T-cell (primary cell): ENCODE measurements at regions of chr7 and their contacts with region 1.

Region 1: GRCh38 chr7:139321071-139321745 is 19.9 kb upstream of the FMC1 start:
- DNase-seq: peak in 1 of 35 experiments; percentile 14
- ATAC-seq: no peak
- H3K4me3 ChIP-seq: no peak overlapping the region
- H3K4me3 Mint-ChIP-seq: no peak overlapping the region
- H3K27ac ChIP-seq: no peak overlapping the region
- H3K27ac Mint-ChIP-seq: no peak overlapping the region
- H3K4me1 ChIP-seq: no peaks in the 10 kb centered on the region
- H3K4me1 Mint-ChIP-seq: no peaks in the 10 kb centered on the region
- H3K27me3 ChIP-seq: peaks cover 0 to 5% of the 10 kb centered on the region in 2 experiments
- H3K27me3 Mint-ChIP-seq: no peaks in the 10 kb centered on the region

Region 2: DNA sequence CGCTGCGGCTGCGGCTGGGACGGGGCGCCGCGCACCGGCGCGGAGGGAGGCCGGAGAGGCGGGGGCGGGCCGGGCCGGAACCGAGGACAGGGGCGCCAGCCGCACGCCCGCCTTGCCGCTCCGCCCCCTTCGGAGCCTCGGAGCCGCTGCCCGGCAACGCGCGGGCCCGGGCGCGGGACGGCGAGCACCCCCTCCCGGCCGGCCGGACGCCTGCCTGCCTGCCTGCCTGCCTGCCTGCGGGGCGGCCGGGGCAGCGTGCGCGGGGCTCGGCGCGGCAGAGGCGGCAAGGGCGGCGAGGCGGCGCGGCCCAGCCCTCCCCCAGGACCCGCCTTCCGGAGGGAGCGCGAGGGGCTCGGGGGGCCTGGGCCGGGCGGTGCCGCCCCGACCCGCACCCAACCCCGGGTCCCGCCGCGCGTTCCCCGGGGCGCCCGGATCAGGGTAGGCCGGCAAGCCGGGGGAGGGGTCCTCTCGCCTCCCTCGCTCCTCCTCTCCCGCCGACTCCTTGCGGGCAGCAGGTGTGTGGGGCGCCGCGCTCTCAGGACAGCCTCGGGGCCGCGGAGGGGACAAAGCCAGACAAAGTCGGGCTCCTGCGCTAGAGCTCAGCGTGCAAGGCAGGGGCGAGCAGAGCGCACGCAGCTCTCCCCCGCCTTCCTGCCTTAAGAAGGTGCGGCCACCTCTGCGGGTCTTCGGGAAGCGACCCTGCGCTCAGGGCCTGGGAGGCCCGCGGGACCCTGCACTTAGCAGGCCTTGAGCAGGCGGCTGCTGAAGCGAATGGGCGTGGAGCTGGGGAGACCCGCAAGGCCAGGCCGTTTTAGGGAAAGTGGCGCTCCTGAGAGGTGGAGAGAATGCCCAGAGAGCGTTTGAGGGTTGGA is 339.6 kb before region 1 on chr7 and contains the start of gene KIAA1549:
- CTCF ChIA-PET with region 1: no interaction called
- POLR2A ChIA-PET with region 1: interaction called in 1 of 2 experiments, 10 read pairs
- DNase-seq: peak in 28 of 35 experiments; percentile 4 to 62 (median 18)
- ATAC-seq: peak; percentile 83 to 90 (median 84)
- H3K4me3 ChIP-seq: peak within 1 kb of the TSS; percentile 47 to 75
- H3K4me3 Mint-ChIP-seq: peak within 1 kb of the TSS; percentile 84 to 92 (median 88)
- H3K27ac ChIP-seq: no peak within 1 kb of the TSS
- H3K27ac Mint-ChIP-seq: no peak within 1 kb of the TSS
- H3K4me1 ChIP-seq: peaks cover 0 to 13% of the 10 kb centered on the region in 2 experiments
- H3K4me1 Mint-ChIP-seq: peaks cover 9 to 14% (median 13%) of the 10 kb centered on the region in 3 donors
- H3K27me3 ChIP-seq: peaks cover 0 to 36% of the 10 kb centered on the region in 2 experiments
- H3K27me3 Mint-ChIP-seq: peaks cover 32 to 43% of the 10 kb centered on the region in 2 donors
- total RNA-seq, gene KIAA1549: 0.05 to 0.29 (median 0.15) TPM